OCI-LY7 (cell line): ENCODE measurements at regions of chr15 and their contacts with region 1.

Region 1: DNA sequence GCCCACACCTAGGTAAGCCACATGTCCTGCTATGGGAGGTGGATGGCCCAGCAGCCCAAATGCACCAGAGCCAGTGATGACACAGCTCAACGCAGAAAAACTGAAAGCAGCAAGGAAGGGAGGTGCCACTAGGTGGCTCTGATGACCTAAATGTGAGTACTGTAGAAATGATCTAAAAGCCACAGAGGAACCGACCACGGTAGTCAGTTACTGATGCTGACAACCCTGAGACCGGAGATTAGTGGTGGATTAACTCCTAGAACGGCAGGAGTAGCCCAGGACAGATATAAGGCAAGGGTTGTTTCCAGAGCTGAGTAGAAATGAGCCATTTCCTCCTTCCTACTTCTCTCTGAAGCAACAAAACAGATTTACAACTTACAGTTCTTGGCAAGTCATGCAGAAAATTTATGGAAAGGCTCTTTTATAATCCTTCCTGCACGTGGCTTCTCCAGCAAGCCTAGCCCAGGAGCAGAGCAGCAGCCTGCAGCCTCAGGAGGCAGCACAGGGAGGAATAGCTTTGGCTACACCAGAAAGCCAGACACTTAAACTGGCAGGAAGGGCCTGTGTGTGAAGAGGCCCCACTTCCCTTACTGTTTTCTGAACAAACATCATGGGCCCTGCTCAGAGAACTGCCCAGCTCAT is 13.1 kb downstream of the FBXL22 start:
- DNase-seq: peak; percentile 88
- H3K4me3 ChIP-seq: no peak overlapping the region
- H3K27ac ChIP-seq: peak overlapping the region; percentile 52
- H3K4me1 ChIP-seq: peaks cover 19% of the 10 kb centered on the region
- CTCF ChIP-seq: peak; percentile 95

Region 2: GRCh38 chr15:63891079-63891767 is 280.9 kb after region 1 on chr15:
- CTCF ChIA-PET with region 1: interaction called, 3 read pairs
- POLR2A ChIA-PET with region 1: no interaction called
- intact Hi-C with region 1: loop called (anchors 2 kb)
- DNase-seq: peak; percentile 75
- H3K4me3 ChIP-seq: no peak overlapping the region
- H3K27ac ChIP-seq: no peak overlapping the region
- H3K4me1 ChIP-seq: peaks cover 20% of the 10 kb centered on the region
- CTCF ChIP-seq: peak; percentile 99

Region 3: DNA sequence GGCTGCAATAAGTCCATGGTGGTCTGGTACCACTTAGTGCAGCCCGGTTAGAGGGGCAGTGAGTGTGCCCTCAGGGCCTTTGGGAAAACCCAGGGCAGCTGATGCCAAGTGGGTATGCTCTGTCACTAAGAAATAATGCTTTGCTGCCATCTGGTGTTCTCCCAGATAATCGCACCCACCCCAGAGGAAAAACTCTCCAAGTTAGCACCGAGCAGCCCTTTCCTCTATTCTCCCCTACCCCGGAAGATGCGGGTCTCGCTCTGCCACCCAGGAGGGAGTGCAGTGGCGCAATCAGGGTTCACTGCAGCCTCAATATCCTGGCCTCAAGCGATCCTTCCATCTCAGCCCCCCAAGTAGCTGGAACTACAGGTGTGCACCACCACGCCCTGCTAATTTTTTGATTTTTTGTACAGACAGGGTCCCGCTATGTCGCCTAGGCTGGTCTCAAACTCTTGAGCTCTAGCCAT is 457.3 kb after region 1 on chr15:
- CTCF ChIA-PET with region 1: no interaction called
- POLR2A ChIA-PET with region 1: no interaction called
- intact Hi-C with region 1: loop called (anchors 1 kb)
- DNase-seq: peak; percentile 81
- H3K4me3 ChIP-seq: peak overlapping the region; percentile 9
- H3K27ac ChIP-seq: no peak overlapping the region
- H3K4me1 ChIP-seq: peaks cover 17% of the 10 kb centered on the region
- CTCF ChIP-seq: peak; percentile 87

Region 4: GRCh38 chr15:64153480-64154367 is 543.4 kb after region 1 on chr15:
- CTCF ChIA-PET with region 1: no interaction called
- POLR2A ChIA-PET with region 1: no interaction called
- intact Hi-C with region 1: loop called (anchors 5 kb)
- DNase-seq: peak; percentile 98
- H3K4me3 ChIP-seq: peak overlapping the region; percentile 90
- H3K27ac ChIP-seq: peak overlapping the region; percentile 93
- H3K4me1 ChIP-seq: peaks cover 46% of the 10 kb centered on the region
- CTCF ChIP-seq: peak; percentile 97